Left ventricle myocardium superior (tissue), 1 donor: ENCODE measurements at regions of chr19 and their contacts with region 1.

Region 1: GRCh38 chr19:29771708-29772414 is 39.9 kb upstream of the CCNE1 start:
- DNase-seq: peak; percentile 65
- ATAC-seq: peak; percentile 82

Region 2: GRCh38 chr19:29844891-29845572 is 73.2 kb after region 1 on chr19:
- intact Hi-C with region 1: no loop called
- DNase-seq: peak; percentile 96
- ATAC-seq: peak; percentile 94

Region 3: DNA sequence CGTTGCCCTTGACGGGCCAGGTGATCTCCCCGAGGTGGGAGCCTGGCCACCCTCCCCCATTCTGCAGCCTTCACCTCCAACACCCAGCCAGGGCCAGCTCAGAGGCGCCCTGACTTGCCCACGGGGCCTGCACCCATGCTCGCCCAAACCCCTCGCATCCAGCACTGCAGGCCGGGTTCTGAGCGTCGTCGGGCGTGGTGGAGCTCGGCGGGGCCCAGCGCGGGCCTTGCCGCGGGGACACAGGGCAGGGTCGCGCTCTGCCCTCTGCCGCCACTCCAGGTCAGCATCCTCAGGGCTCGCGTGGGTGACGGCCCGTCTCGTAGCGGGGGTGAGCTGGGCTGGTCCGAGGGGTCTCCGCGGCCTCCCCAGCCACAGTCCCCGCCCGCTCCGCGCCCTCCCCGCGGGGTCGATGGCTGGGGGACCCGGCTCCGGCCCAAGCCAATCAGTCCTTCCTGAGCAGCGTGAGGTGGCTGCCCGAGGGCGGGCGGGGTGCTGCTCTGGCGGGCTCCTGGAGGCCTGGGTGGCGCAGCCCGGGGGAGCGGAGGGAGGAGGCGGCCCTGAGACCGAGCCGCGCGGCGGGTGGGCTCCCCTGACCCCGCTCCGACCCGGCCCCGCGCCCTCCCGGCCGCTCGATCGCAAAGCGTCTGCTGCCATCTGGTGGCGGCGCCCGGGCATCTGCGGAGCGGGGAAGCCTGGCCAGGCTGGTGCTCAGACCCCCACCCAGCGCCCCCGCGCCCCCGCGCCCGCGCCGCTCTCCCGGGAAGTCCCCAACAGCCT is 101.4 kb after region 1 on chr19:
- intact Hi-C with region 1: loop called (anchors 5 kb)
- DNase-seq: peak; percentile 73
- ATAC-seq: peak; percentile 86

Region 4: GRCh38 chr19:30171795-30172612 is 400.1 kb after region 1 on chr19:
- intact Hi-C with region 1: no loop called
- DNase-seq: no peak
- ATAC-seq: no peak